Natural killer cell (primary cell): ENCODE measurements at regions of chr1 and their contacts with region 1.

Region 1: DNA sequence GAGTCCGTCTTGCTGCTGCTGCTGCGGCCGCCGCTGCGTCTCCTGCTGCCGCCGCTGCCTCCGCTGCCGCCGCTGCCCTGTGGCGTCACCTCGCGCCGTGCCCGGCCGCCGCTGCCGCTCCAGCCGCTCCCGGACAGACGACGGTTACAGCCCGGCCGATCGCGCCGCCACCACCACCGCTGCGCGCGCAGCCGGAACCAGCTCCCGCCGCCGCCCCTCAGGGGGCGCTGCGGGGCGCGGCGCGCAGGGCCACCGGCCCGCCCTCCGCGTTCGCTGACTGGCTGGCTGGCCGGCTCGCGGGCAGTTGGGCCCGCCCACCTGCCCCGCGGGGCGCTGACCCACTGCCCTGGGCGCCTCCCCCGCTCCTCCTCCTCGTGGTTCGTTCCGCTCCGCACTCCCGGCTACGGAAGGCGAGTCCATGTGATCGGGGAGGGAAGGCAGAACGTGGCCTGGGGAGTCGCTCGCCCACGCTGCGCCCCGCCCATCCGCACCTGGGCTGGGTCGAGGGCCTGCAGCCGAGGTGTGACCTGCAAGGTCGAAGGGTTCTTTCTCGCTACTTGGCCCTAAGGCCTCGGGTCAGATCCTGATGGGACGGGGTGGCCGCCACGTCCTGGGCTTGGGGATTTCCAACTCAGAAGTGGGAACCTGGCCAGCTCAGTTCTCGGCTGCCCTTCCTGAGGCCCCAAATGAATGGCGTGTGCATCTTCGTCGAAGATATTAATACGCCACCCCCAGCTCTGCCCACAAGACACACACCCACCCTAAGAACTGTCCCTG is at the start of gene PTP4A2:
- DNase-seq: peak; percentile 85 to 92
- ATAC-seq: peak; percentile 61 to 86 (median 78)
- H3K4me3 ChIP-seq: peak within 1 kb of the TSS; percentile 83
- H3K4me3 Mint-ChIP-seq: peak within 1 kb of the TSS; percentile 100
- H3K27ac ChIP-seq: peak within 1 kb of the TSS; percentile 78
- H3K27ac Mint-ChIP-seq: peak within 1 kb of the TSS; percentile 90 to 99
- H3K4me1 ChIP-seq: peaks cover 70% of the 10 kb centered on the region
- H3K4me1 Mint-ChIP-seq: peaks cover 72 to 76% of the 10 kb centered on the region in 2 donors
- H3K27me3 ChIP-seq: no peaks in the 10 kb centered on the region
- H3K27me3 Mint-ChIP-seq: no peaks in the 10 kb centered on the region
- CTCF ChIP-seq: peak; percentile 53
- total RNA-seq, gene PTP4A2: 435 to 527 (median 443) TPM

Region 2: GRCh38 chr1:31633053-31633452 is 305.3 kb before region 1 on chr1:
- intact Hi-C with region 1: no loop called
- DNase-seq: peak in 1 of 2 donors; percentile 36
- ATAC-seq: no peak
- H3K4me3 ChIP-seq: no peak overlapping the region
- H3K4me3 Mint-ChIP-seq: no peak overlapping the region
- H3K27ac ChIP-seq: no peak overlapping the region
- H3K27ac Mint-ChIP-seq: no peak overlapping the region
- H3K4me1 ChIP-seq: no peaks in the 10 kb centered on the region
- H3K4me1 Mint-ChIP-seq: peaks cover 24 to 25% of the 10 kb centered on the region in 2 donors
- H3K27me3 ChIP-seq: no peaks in the 10 kb centered on the region
- H3K27me3 Mint-ChIP-seq: no peaks in the 10 kb centered on the region
- CTCF ChIP-seq: no peak

Region 3: GRCh38 chr1:31831397-31832378 is 106.7 kb before region 1 on chr1:
- intact Hi-C with region 1: loop called (anchors 1 kb)
- DNase-seq: no peak
- ATAC-seq: no peak
- H3K4me3 ChIP-seq: no peak overlapping the region
- H3K4me3 Mint-ChIP-seq: no peak overlapping the region
- H3K27ac ChIP-seq: no peak overlapping the region
- H3K27ac Mint-ChIP-seq: no peak overlapping the region
- H3K4me1 ChIP-seq: peaks cover 29% of the 10 kb centered on the region
- H3K4me1 Mint-ChIP-seq: peaks cover 35 to 38% of the 10 kb centered on the region in 2 donors
- H3K27me3 ChIP-seq: no peaks in the 10 kb centered on the region
- H3K27me3 Mint-ChIP-seq: no peaks in the 10 kb centered on the region
- CTCF ChIP-seq: no peak

Region 4: GRCh38 chr1:31886866-31887265 is 51.5 kb before region 1 on chr1:
- intact Hi-C with region 1: loop called (anchors 5 kb)
- DNase-seq: no peak
- ATAC-seq: no peak
- H3K4me3 ChIP-seq: no peak overlapping the region
- H3K4me3 Mint-ChIP-seq: no peak overlapping the region
- H3K27ac ChIP-seq: no peak overlapping the region
- H3K27ac Mint-ChIP-seq: peak overlapping the region; percentile 7 to 30
- H3K4me1 ChIP-seq: peaks cover 19% of the 10 kb centered on the region
- H3K4me1 Mint-ChIP-seq: peaks cover 19 to 21% of the 10 kb centered on the region in 2 donors
- H3K27me3 ChIP-seq: no peaks in the 10 kb centered on the region
- H3K27me3 Mint-ChIP-seq: no peaks in the 10 kb centered on the region
- CTCF ChIP-seq: no peak

Region 5: GRCh38 chr1:31970873-31971272 is 32.5 kb after region 1 on chr1:
- intact Hi-C with region 1: no loop called
- DNase-seq: no peak
- ATAC-seq: no peak
- H3K4me3 ChIP-seq: no peak overlapping the region
- H3K4me3 Mint-ChIP-seq: no peak overlapping the region
- H3K27ac ChIP-seq: no peak overlapping the region
- H3K27ac Mint-ChIP-seq: no peak overlapping the region
- H3K4me1 ChIP-seq: no peaks in the 10 kb centered on the region
- H3K4me1 Mint-ChIP-seq: no peaks in the 10 kb centered on the region
- H3K27me3 ChIP-seq: no peaks in the 10 kb centered on the region
- H3K27me3 Mint-ChIP-seq: no peaks in the 10 kb centered on the region
- CTCF ChIP-seq: no peak

Region 6: DNA sequence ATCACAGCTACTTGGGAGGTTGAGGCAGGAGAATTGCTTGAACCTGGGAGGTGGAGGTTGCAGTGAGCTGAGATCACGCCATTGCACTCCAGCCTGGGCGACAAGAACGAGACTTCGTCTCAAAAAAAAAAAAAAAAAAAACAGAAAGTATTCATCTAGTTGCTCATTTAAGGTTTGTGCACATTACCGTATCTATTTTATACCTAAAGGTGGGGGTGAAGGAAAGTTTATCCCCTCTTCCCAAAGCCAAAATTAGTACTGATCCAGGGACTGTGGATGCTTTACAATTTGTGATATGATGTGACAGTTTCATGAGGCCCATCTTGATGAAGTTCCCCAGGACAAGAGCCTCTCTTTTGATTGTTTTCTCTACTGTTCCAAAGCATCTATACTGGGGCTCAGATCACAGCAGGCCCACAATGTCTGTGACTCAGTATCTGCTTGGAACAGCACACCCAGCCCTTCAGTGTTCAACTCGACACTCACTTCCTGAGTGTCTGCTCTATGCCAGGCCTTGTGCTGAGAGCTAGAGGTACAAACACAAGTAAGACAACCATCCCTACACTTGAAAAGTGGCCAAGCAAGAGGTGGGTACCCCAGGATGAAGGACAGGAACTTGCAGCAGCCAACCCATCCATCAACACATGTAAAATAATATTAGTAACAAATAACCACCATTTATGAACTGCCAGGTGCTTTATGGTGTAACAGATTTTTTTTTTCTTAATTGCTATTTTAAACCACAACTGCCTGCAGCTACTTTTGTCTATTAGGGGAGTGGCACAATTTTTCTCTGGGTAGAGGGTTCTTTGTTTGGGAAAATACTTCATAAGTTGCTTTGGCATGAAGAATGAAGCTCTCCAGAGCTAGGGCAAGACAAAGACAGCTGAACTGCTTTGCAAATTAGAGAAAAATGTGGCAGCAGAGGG is 46.3 kb after region 1 on chr1:
- intact Hi-C with region 1: loop called (anchors 2 kb)
- DNase-seq: peak; percentile 24 to 63
- ATAC-seq: peak; percentile 39 to 65 (median 62)
- H3K4me3 ChIP-seq: no peak overlapping the region
- H3K4me3 Mint-ChIP-seq: peak overlapping the region; percentile 73
- H3K27ac ChIP-seq: peak overlapping the region; percentile 64
- H3K27ac Mint-ChIP-seq: peak overlapping the region; percentile 93 to 96
- H3K4me1 ChIP-seq: peaks cover 52% of the 10 kb centered on the region
- H3K4me1 Mint-ChIP-seq: peaks cover 48 to 53% of the 10 kb centered on the region in 2 donors
- H3K27me3 ChIP-seq: no peaks in the 10 kb centered on the region
- H3K27me3 Mint-ChIP-seq: no peaks in the 10 kb centered on the region
- CTCF ChIP-seq: no peak